Head of caudate nucleus (tissue), 42 donors: ENCODE measurements at regions of chr19 and their contacts with region 1.

Region 1: DNA sequence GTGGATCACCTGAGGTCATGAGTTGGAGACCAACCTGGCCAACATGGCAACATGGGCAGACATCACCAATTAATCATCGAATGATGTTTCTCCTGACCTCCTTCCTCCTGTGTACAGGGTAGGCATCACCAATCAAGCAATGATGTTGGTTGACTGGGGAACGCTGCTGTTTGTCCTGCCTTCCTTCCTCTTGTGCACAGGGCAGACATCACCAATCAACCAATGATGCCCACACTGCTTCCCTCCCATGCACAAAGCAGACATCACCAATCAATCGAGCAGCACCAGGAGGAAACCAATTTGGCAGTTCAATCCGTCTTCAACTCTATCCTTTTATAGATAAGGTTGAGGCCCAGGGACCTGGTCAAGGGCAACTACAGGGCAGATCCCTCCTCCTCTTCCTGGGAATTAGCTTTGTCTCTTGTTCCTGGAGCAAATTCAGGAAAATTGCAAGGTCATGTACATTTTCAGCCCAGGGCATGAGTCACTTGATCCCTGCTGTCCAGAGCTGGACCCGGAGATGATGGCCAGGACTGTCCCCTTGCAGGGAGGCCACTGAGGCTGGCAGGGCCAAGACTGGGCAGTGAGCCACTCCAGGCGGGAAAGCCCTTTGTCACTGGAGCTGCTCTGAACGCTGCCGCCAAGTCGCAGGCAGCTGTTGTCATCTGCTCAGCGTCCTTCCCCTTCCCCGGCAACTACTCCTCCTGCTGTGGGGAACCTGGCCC is 5.3 kb upstream of the CSNK1G2 start:
- DNase-seq: peak in 20 of 42 donors; percentile 22 to 80 (median 49)

Region 2: DNA sequence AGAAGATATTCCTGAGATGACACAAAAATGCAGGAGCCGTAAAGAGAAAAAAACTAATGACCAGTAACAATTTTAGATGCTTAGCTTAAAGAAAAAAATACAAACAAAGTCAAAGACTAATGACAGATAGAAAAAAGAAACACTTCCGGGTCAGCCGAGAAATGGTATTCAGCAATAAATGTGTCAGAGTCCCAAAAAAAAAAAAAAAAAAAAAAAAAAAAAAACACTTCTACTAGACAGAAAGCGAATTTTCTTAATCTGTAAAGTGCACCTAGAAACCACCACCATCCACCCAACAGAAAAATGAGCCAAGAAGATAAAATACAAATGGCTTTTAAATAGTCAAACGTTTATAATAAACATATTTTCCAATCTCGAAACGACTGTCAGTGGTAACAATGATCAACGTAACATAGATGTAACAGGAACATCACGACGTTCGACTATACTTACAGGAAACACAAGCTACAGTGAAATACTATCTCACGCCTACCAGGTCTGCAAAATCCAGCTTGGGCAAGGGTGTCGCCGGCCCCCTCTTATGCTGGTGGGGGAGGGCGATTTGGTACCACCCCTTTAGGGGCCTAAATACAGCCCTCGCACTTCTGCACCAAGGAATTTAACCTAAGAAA is 61.0 kb before region 1 on chr19:
- intact Hi-C with region 1: no loop called
- DNase-seq: no peak

Region 3: DNA sequence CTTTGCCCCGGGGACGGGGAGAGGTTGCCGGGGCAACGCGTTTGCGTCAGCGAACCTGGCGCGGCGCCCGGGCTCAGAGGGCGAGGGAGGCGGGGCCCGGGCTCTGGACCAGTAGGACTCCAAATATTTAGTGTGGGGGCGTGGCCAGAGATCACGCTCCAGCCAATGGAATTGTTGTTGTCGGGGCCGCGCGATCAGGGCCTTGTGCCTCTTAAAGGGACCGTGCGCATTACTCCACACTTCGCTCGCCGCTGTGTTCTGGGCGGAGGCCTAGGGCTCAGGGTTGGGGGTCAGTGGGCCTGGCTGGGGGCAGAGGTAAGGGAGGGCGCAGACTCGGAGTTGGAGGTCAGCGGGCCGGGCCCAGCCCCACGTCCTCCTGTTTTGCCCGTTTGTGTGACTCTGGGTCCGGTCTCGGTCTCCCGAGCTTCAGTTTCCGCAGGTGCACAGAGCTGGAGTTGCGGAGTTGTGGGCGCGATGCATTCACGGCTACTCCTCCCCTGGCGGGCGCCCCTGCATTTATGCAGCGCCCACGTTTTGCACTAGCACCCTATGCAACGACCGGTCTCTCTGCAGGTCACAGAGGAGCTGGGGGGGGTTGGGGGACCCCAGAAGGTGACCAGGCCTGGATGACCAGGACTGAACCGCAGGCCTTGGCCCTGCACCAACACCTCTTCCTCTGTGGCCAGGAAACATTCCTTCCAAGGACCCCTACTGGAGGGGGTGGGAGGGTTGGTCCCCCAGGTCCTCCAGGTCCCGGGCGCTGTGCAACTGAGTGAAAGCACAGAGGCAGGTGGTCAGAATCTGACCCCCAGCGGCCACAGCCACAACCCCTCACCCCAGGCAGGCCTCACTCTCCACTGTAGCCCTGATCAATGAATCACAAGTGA is 126.1 kb after region 1 on chr19:
- intact Hi-C with region 1: loop called (anchors 10 kb)
- DNase-seq: peak; percentile 98 to 100 (median 99)